ENCODE measurements at regions of chr1 and their contacts with region 1.

Region 1: GRCh38 chr1:116485071-116485735 is 85.6 kb downstream of the CD58 start:
- DNase-seq: peak; percentile 61 to 80
- ATAC-seq: peak; percentile 72 to 80
- H3K4me3 ChIP-seq: no peak overlapping the region
- H3K27ac ChIP-seq: peak overlapping the region in 3 of 4 donors; percentile 25 to 49 (median 48)
- H3K4me1 ChIP-seq: peaks cover 4 to 36% of the 10 kb centered on the region in 2 donors
- H3K27me3 ChIP-seq: no peaks in the 10 kb centered on the region
- CTCF ChIP-seq: peak; percentile 80 to 95 (median 93)
- POLR2A ChIP-seq: no peak

Region 2: GRCh38 chr1:115807723-115808122 is 677.5 kb before region 1 on chr1:
- in situ Hi-C with region 1: loop called in 1 of 4 experiments (anchors 25 kb)
- intact Hi-C with region 1: no loop called
- DNase-seq: no peak
- ATAC-seq: peak in 1 of 2 donors; percentile 41
- H3K4me3 ChIP-seq: no peak overlapping the region
- H3K27ac ChIP-seq: no peak overlapping the region
- H3K4me1 ChIP-seq: no peaks in the 10 kb centered on the region
- H3K27me3 ChIP-seq: no peaks in the 10 kb centered on the region
- CTCF ChIP-seq: peak in 4 of 5 experiments; percentile 24 to 56 (median 44)
- POLR2A ChIP-seq: no peak

Region 3: GRCh38 chr1:116151739-116152576 is 333.2 kb before region 1 on chr1:
- in situ Hi-C with region 1: loop called in 2 of 4 experiments (anchors 5 to 10 kb)
- intact Hi-C with region 1: no loop called
- DNase-seq: peak in 1 of 2 donors; percentile 58
- ATAC-seq: peak; percentile 93 to 97
- H3K4me3 ChIP-seq: peak overlapping the region; percentile 54 to 57 (median 56)
- H3K27ac ChIP-seq: peak overlapping the region; percentile 39 to 60 (median 56)
- H3K4me1 ChIP-seq: peaks cover 5 to 12% of the 10 kb centered on the region in 2 donors
- H3K27me3 ChIP-seq: no peaks in the 10 kb centered on the region
- CTCF ChIP-seq: peak; percentile 83 to 94 (median 91)
- POLR2A ChIP-seq: no peak

Region 4: DNA sequence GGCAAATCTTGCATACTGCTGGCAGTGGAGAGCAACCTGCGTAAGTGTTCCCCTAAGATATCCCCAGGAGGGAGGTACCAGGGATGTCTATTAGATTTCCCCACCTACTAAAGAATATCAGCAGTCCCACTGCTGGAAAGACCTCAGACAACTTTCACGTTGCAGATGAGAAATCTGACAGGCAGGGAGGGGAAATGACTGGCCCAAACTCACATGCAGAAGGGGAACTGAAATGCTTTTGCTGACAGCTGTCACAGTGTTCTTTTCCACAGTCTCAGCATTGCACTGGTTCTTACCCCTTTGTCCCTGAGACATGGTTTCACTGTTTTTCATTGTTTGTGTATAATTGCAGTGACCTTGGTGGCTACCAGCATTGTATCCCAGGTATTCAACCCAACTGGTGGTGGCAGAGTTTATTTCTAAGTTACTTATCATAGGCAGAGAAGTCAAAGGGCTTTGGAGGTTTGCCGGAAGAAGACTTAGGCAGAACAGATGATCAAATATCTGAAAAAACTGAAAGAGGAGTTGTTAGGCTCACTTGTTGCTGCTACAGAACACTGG is 196.9 kb before region 1 on chr1:
- in situ Hi-C with region 1: no loop called
- intact Hi-C with region 1: loop called (anchors 10 kb)
- DNase-seq: no peak
- ATAC-seq: no peak
- H3K4me3 ChIP-seq: no peak overlapping the region
- H3K27ac ChIP-seq: no peak overlapping the region
- H3K4me1 ChIP-seq: peaks cover 0 to 13% of the 10 kb centered on the region in 2 donors
- H3K27me3 ChIP-seq: no peaks in the 10 kb centered on the region
- CTCF ChIP-seq: no peak
- POLR2A ChIP-seq: no peak

Region 5: GRCh38 chr1:116299248-116299915 is 185.8 kb before region 1 on chr1:
- in situ Hi-C with region 1: no loop called
- intact Hi-C with region 1: no loop called
- DNase-seq: no peak
- ATAC-seq: peak; percentile 39 to 65
- H3K4me3 ChIP-seq: no peak overlapping the region
- H3K27ac ChIP-seq: no peak overlapping the region
- H3K4me1 ChIP-seq: no peaks in the 10 kb centered on the region
- H3K27me3 ChIP-seq: no peaks in the 10 kb centered on the region
- CTCF ChIP-seq: no peak
- POLR2A ChIP-seq: no peak

Region 6: DNA sequence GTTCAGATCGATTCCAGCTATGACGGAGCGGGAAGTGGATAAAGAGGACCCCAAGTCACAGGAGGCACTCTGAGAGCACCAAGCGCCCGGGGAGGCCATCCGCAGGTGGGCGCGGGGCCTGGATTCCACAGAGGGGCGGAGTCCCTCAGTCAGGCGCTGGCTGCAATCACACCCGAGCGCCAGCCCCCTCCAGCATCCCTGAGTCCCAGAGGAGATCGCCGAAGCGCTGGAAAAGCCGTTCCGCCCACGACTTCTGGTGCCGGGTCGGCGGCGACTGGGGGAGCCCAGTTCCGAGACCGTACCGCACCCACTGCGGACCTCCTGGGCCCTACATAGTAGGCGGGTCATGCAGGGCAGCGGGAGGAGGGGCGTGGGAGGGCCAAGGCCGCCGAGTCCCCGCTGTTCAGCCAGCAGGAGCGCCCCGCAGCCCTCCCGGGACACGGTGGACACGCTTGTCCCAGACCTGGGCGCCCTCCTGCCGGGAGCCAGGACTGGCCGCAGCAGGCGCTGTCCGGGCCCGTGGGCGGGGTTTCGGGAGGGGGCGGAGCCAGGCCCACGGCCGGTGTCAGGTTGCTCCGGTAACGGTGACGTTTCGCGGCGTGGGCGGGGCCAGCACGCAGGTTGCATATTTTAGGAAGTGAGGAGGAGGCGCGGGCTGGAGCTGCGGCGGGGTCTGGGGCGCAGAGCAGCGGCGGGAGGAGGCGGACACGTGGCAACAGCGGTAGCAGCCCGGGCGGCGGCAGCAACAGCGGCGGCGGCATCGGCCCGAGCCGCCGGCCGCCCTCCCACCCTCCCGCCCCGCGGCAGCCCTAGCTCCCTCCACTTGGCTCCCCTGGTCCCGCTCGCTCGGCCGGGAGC is 112.4 kb before region 1 on chr1 and contains the start of gene ATP1A1:
- in situ Hi-C with region 1: loop called in 2 of 4 experiments (anchors 10 to 25 kb)
- intact Hi-C with region 1: no loop called
- DNase-seq: peak; percentile 96 to 97
- ATAC-seq: peak; percentile 50 to 62
- H3K4me3 ChIP-seq: peak within 1 kb of the TSS; percentile 80 to 93 (median 86)
- H3K27ac ChIP-seq: peak within 1 kb of the TSS; percentile 94 to 98 (median 96)
- H3K4me1 ChIP-seq: peaks cover 28 to 46% of the 10 kb centered on the region in 2 donors
- H3K27me3 ChIP-seq: no peaks in the 10 kb centered on the region
- CTCF ChIP-seq: peak in 3 of 5 experiments; percentile 22 to 49 (median 37)
- POLR2A ChIP-seq: peak; percentile 98 to 99
- total RNA-seq, gene ATP1A1: 103 to 257 (median 204) TPM